Activated T-helper 1 cell treated with anti-CD3 and anti-CD28 coated beads, Interleukin-12 subunit alpha, Interleukin-12 subunit beta, Interleukin-2, Interleukin-4 antibody, amounts not matched to agents 30 ng/mL and 10 ng/mL and 1 ng/mL, durations not matched to agents 14 hours and 24 hours and 36 hours (primary cell): ENCODE measurements at regions of chr1 and their contacts with region 1.

Region 1: GRCh38 chr1:212721388-212722247 is 22.0 kb upstream of the BATF3 start:
- DNase-seq: peak; percentile 39
- H3K4me3 Mint-ChIP-seq: peak overlapping the region; percentile 34
- H3K27ac Mint-ChIP-seq: peak overlapping the region; percentile 82
- H3K4me1 Mint-ChIP-seq: peaks cover 44% of the 10 kb centered on the region
- H3K27me3 Mint-ChIP-seq: peaks cover 6% of the 10 kb centered on the region

Region 2: GRCh38 chr1:212738330-212738729 is 16.7 kb after region 1 on chr1:
- intact Hi-C with region 1: loop called (anchors 2 kb)
- DNase-seq: no peak
- H3K4me3 Mint-ChIP-seq: peak overlapping the region; percentile 43
- H3K27ac Mint-ChIP-seq: peak overlapping the region; percentile 86
- H3K4me1 Mint-ChIP-seq: peaks cover 42% of the 10 kb centered on the region
- H3K27me3 Mint-ChIP-seq: no peaks in the 10 kb centered on the region

Region 3: GRCh38 chr1:212749821-212750535 is 28.4 kb after region 1 on chr1:
- intact Hi-C with region 1: loop called (anchors 2 kb)
- DNase-seq: no peak
- H3K4me3 Mint-ChIP-seq: peak overlapping the region; percentile 8
- H3K27ac Mint-ChIP-seq: peak overlapping the region; percentile 76
- H3K4me1 Mint-ChIP-seq: peaks cover 55% of the 10 kb centered on the region
- H3K27me3 Mint-ChIP-seq: peaks cover 2% of the 10 kb centered on the region